CD4-positive, alpha-beta memory T cell (primary cell): ENCODE measurements at regions of chr2 and their contacts with region 1.

Region 1: GRCh38 chr2:43169987-43170386 is 56.4 kb downstream of the ZFP36L2 start:
- DNase-seq: peak; percentile 66 to 74 (median 69)
- H3K4me3 ChIP-seq: peak overlapping the region in 1 of 2 donors; percentile 42
- H3K4me3 Mint-ChIP-seq: peak overlapping the region; percentile 36 to 89 (median 82)
- H3K27ac ChIP-seq: peak overlapping the region; percentile 65
- H3K27ac Mint-ChIP-seq: peak overlapping the region; percentile 93 to 99 (median 98)
- H3K4me1 ChIP-seq: peaks cover 83% of the 10 kb centered on the region
- H3K4me1 Mint-ChIP-seq: peaks cover 49 to 85% (median 70%) of the 10 kb centered on the region in 4 donors
- H3K27me3 ChIP-seq: no peaks in the 10 kb centered on the region
- H3K27me3 Mint-ChIP-seq: no peaks in the 10 kb centered on the region

Region 2: DNA sequence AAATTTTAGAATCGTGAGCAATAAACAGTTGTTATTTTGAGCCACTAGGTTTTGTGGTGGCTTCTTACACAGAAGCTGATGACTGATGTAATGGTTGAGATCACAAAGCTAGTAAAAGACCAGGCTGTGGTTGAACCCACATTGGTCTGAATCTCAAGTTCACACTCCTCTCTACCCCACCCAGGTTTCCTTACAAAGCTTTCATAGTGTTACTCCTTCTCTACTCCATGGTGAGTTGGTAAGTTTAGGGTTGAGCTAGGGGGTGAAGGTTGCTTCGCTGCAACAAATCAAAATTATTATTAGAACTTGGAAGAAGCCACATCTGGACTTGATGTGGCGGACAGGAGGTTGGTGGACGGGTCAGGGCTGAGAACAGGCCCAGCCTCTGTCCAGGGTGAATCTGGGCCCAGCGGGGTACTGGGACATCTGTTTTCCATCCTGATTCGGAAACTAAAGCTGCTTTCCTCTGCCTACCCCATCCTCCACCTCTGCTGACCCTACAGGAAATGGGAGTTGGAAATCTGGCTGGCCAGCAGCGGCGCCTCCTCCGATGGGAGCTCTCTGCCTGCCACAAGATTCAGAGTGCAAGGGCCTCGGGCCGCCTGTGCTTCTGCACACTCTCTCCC is 29.9 kb before region 1 on chr2:
- CTCF ChIA-PET with region 1: interaction called, 361 read pairs
- POLR2A ChIA-PET with region 1: interaction called, 1,220 read pairs
- intact Hi-C with region 1: loop called (anchors 1 kb)
- DNase-seq: peak in 4 of 5 donors; percentile 48 to 65 (median 58)
- H3K4me3 ChIP-seq: no peak overlapping the region
- H3K4me3 Mint-ChIP-seq: peak overlapping the region in 7 of 8 donors; percentile 27 to 86 (median 67)
- H3K27ac ChIP-seq: peak overlapping the region; percentile 83
- H3K27ac Mint-ChIP-seq: peak overlapping the region; percentile 91 to 98 (median 95)
- H3K4me1 ChIP-seq: peaks cover 75% of the 10 kb centered on the region
- H3K4me1 Mint-ChIP-seq: peaks cover 48 to 80% (median 62%) of the 10 kb centered on the region in 4 donors
- H3K27me3 ChIP-seq: no peaks in the 10 kb centered on the region
- H3K27me3 Mint-ChIP-seq: no peaks in the 10 kb centered on the region

Region 3: DNA sequence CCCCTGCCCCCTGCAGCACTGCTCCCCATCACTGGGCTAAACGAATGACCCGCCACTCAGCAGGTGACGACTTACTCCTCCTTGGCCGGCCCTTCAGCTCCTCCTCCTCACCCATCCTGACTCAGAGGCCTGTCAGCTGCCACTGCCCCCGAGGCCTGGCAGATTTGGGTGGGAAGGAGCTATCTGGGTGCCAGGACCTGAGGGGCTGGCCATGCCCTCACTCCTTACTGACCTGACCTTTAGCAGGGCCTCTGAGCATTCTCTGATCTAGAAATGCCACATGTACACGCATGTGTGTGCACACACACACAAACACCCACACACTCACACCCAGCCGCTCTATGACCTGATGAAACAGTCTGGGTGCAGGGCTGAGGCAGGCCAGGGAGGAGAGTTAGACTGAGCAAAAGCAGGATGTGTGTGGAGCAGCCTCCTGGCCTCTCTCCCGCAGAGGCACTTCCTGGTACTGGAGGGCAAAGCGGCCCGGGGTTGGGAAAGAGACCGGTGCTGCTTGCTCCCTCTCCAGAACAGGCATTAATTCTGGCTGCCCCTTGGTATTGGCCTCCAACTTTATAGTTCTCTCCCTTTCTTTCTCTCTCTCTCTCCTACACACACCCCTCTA is 11.6 kb before region 1 on chr2:
- CTCF ChIA-PET with region 1: interaction called, 28 read pairs
- POLR2A ChIA-PET with region 1: interaction called, 75 read pairs
- intact Hi-C with region 1: loop called (anchors 1 kb)
- DNase-seq: peak in 1 of 5 donors; percentile 55
- H3K4me3 ChIP-seq: peak overlapping the region; percentile 30 to 40
- H3K4me3 Mint-ChIP-seq: peak overlapping the region; percentile 75 to 87 (median 80)
- H3K27ac ChIP-seq: peak overlapping the region; percentile 84
- H3K27ac Mint-ChIP-seq: peak overlapping the region; percentile 97 to 99 (median 99)
- H3K4me1 ChIP-seq: peaks cover 76% of the 10 kb centered on the region
- H3K4me1 Mint-ChIP-seq: peaks cover 41 to 94% (median 66%) of the 10 kb centered on the region in 4 donors
- H3K27me3 ChIP-seq: no peaks in the 10 kb centered on the region
- H3K27me3 Mint-ChIP-seq: no peaks in the 10 kb centered on the region

Region 4: GRCh38 chr2:43184339-43184895 is 14.4 kb after region 1 on chr2:
- CTCF ChIA-PET with region 1: interaction called, 96 read pairs
- POLR2A ChIA-PET with region 1: interaction called, 6,960 read pairs
- intact Hi-C with region 1: loop called (anchors 1 kb)
- DNase-seq: peak in 3 of 5 donors; percentile 49 to 77 (median 56)
- H3K4me3 ChIP-seq: no peak overlapping the region
- H3K4me3 Mint-ChIP-seq: peak overlapping the region in 6 of 8 donors; percentile 5 to 77 (median 56)
- H3K27ac ChIP-seq: peak overlapping the region; percentile 18
- H3K27ac Mint-ChIP-seq: peak overlapping the region; percentile 82 to 99 (median 97)
- H3K4me1 ChIP-seq: peaks cover 65% of the 10 kb centered on the region
- H3K4me1 Mint-ChIP-seq: peaks cover 37 to 71% (median 49%) of the 10 kb centered on the region in 4 donors
- H3K27me3 ChIP-seq: no peaks in the 10 kb centered on the region
- H3K27me3 Mint-ChIP-seq: no peaks in the 10 kb centered on the region